CD4-positive, alpha-beta memory T cell (primary cell): ENCODE measurements at regions of chrX and their contacts with region 1.

Region 1: DNA sequence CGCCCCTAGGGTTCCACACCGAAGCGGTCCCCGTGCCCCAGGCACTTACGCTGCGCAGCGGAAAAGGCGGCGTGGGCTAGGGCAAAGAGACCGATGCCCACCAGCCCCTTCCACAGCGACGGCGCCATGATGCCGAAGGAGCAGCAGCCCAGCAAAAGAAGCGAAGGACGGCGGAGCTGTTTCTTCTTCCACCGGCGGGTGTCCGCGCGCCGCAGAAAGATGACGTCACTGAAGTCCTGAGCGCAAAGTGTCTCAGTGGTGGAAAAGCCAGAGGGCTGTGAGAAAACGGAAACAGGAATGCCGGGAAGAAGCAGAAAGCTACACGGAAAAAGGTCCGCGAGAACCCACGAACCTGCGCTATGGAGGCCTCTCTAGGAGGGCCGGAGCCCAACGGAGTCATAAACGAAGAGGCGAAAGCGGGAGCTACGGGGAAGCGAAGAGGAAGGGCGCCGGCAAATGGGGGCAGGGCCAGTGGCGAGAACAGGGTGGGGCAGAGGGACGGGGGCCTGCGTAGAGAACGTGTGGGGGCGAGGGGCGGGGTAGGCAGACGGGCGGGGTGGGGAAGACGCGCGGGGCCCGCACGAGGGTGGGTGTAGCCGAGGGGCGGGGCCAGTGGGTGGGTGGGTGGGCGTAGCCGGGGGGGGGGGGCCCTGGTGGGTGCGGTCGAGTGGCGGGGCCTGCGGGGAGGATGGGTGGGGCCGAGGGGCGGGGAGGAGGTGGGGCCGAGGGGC is at the start of gene MMGT1:
- DNase-seq: peak; percentile 80 to 87 (median 85)
- H3K4me3 ChIP-seq: peak within 1 kb of the TSS; percentile 70 to 73
- H3K4me3 Mint-ChIP-seq: peak within 1 kb of the TSS; percentile 87 to 99 (median 96)
- H3K27ac ChIP-seq: peak within 1 kb of the TSS; percentile 92
- H3K27ac Mint-ChIP-seq: peak within 1 kb of the TSS; percentile 98 to 99 (median 99)
- H3K4me1 ChIP-seq: peaks cover 27% of the 10 kb centered on the region
- H3K4me1 Mint-ChIP-seq: peaks cover 18 to 52% (median 33%) of the 10 kb centered on the region in 4 donors
- H3K27me3 ChIP-seq: no peaks in the 10 kb centered on the region
- H3K27me3 Mint-ChIP-seq: no peaks in the 10 kb centered on the region
- total RNA-seq, gene MMGT1: 28.5 to 29.0 TPM

Region 2: GRCh38 chrX:135985141-135985972 is 11.6 kb after region 1 on chrX and contains the start of gene SLC9A6:
- CTCF ChIA-PET with region 1: interaction called, 7 read pairs
- POLR2A ChIA-PET with region 1: interaction called, 35 read pairs
- intact Hi-C with region 1: loop called (anchors 1 kb)
- DNase-seq: peak; percentile 56 to 74 (median 64)
- H3K4me3 ChIP-seq: peak within 1 kb of the TSS; percentile 47 to 80
- H3K4me3 Mint-ChIP-seq: peak within 1 kb of the TSS; percentile 89 to 98 (median 92)
- H3K27ac ChIP-seq: peak within 1 kb of the TSS; percentile 67
- H3K27ac Mint-ChIP-seq: peak within 1 kb of the TSS; percentile 89 to 93 (median 92)
- H3K4me1 ChIP-seq: peaks cover 49% of the 10 kb centered on the region
- H3K4me1 Mint-ChIP-seq: peaks cover 30 to 85% (median 52%) of the 10 kb centered on the region in 4 donors
- H3K27me3 ChIP-seq: no peaks in the 10 kb centered on the region
- H3K27me3 Mint-ChIP-seq: no peaks in the 10 kb centered on the region
- total RNA-seq, gene SLC9A6: 20.5 to 24.3 TPM

Region 3: DNA sequence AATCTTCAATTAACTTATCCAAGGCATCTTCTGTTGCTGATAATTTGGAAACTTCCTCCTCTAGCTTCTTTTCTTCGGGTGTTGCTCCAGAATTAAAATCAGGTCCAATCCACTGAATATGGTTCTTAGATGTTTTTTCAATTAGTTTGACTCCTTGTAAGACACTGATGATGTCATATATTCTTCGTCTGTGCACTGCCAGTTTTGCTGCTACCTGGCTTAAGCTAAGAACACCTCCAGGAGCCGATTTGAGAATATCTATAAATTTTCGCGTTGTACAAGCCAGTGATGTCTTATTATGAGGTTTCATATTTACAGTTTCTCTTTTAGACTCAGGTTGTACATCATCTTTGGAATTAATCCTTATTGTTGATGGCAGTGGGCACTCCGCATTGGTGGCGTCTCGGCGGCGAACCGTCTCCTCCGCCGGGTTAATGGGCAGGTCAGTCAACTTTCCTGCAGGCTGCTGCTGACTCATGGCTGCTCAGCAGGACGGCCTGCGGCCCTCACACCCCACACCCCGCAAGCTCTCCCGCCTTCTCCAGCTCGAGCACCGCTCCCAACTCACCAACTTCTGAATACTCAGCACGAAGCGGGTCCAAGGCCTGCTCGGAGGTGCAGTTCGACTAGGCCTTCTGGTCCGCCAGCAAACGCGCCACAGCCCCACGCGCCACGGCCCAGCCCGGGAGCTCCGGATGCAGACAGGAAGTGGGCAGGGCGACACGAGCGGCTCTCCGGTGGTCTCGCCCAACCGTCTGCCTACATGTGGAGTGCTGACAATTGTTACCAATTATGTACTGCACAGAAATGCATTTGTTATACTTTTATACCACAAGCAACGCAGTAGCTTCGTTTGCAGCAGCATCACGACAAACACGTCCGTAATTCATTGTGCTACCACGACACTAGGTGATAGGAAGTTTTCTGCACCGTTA is 124.4 kb after region 1 on chrX:
- CTCF ChIA-PET with region 1: no interaction called
- POLR2A ChIA-PET with region 1: no interaction called
- intact Hi-C with region 1: no loop called
- DNase-seq: no peak
- H3K4me3 ChIP-seq: no peak overlapping the region
- H3K4me3 Mint-ChIP-seq: no peak overlapping the region
- H3K27ac ChIP-seq: no peak overlapping the region
- H3K27ac Mint-ChIP-seq: peak overlapping the region in 1 of 7 donors; percentile 4
- H3K4me1 ChIP-seq: no peaks in the 10 kb centered on the region
- H3K4me1 Mint-ChIP-seq: no peaks in the 10 kb centered on the region
- H3K27me3 ChIP-seq: no peaks in the 10 kb centered on the region
- H3K27me3 Mint-ChIP-seq: no peaks in the 10 kb centered on the region

Region 4: DNA sequence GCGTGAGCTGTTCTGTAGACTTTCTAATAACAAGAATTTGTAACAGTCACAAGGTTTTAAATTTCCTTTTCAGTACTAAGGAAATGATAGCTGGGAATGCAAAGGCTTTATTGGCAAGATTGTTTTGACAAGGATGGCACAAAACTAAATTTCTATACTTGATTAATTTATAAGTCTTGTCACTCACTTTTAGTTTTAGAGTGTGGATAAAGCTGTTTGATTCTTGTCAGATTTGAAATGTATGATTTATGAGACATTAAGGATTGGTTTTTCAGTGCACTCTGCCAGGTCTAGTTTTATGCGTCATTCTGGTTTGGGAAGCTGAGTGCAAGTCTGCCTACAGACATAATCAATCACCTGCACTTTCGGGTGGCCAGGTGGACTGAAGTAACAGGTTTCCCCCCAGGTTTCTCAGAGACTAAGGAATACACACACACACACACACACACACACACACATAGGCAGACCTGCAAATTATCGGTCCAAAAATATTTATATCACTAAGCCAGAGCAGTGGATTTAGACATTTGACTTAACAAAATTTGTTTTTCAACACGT is 182.9 kb after region 1 on chrX:
- CTCF ChIA-PET with region 1: no interaction called
- POLR2A ChIA-PET with region 1: no interaction called
- intact Hi-C with region 1: no loop called
- DNase-seq: no peak
- H3K4me3 ChIP-seq: no peak overlapping the region
- H3K4me3 Mint-ChIP-seq: no peak overlapping the region
- H3K27ac ChIP-seq: no peak overlapping the region
- H3K27ac Mint-ChIP-seq: peak overlapping the region in 3 of 7 donors; percentile 3 to 85 (median 19)
- H3K4me1 ChIP-seq: peaks cover 5% of the 10 kb centered on the region
- H3K4me1 Mint-ChIP-seq: peaks cover 12 to 44% (median 24%) of the 10 kb centered on the region in 4 donors
- H3K27me3 ChIP-seq: no peaks in the 10 kb centered on the region
- H3K27me3 Mint-ChIP-seq: no peaks in the 10 kb centered on the region

Region 5: DNA sequence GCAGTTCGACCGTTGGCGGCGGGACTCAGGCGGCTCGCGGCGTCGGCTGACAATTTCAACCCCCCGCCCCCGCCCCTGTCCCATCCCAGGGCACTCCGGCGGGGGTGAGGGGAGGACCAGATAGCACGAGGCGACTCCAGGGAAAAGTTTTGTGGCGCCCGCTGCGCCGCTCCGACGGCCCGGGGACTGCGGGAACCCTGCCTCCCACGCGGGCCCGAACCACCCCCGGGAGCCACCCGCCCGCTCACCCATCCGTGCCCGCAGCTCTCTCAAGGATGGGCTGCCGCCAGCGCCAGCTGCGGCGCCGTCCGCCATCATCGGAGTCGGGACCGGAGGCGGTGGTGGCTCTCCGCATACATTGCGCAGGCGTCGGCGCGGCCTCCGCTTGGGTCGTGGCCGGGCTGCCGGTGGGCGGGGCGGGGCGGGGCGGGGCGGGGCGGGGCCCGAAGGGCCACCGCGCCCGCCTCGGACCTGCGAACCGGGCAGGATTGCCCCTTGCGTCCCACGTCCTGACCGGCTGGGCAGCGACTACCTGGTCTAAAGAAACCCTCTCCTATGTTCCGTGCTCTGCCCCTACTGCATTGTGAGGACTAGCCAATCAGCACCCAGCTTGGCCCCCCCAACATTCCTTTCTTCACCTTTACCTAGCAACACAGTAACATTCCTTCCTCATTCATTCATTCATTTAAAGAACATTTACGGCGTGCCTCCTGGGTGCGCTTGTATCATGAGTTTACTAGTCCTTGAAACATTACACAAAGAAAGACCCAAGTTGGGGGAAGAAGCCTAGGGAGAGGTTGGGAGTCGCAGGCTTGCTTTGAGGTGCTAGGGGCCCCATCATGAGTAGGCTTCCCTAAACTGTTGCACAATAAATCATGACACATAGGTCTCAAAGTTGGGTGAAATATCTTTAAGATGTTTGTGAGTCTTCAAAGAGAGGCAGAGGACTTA is 277.6 kb after region 1 on chrX and contains the start of gene MAP7D3:
- CTCF ChIA-PET with region 1: no interaction called
- POLR2A ChIA-PET with region 1: no interaction called
- intact Hi-C with region 1: loop called (anchors 5 kb)
- DNase-seq: peak; percentile 67 to 75 (median 73)
- H3K4me3 ChIP-seq: peak within 1 kb of the TSS; percentile 23 to 60
- H3K4me3 Mint-ChIP-seq: peak within 1 kb of the TSS; percentile 86 to 94 (median 88)
- H3K27ac ChIP-seq: peak within 1 kb of the TSS; percentile 46
- H3K27ac Mint-ChIP-seq: peak within 1 kb of the TSS; percentile 78 to 97 (median 88)
- H3K4me1 ChIP-seq: peaks cover 14% of the 10 kb centered on the region
- H3K4me1 Mint-ChIP-seq: peaks cover 2 to 12% (median 5%) of the 10 kb centered on the region in 4 donors
- H3K27me3 ChIP-seq: no peaks in the 10 kb centered on the region
- H3K27me3 Mint-ChIP-seq: no peaks in the 10 kb centered on the region
- total RNA-seq, gene MAP7D3: 8.5 to 10.1 TPM